Calu3 (cell line): ENCODE measurements at regions of chr4 and their contacts with region 1.

Region 1: GRCh38 chr4:155529272-155529671 is 137.4 kb upstream of the GUCY1A1 start:
- DNase-seq: peak; percentile 43
- H3K4me3 Mint-ChIP-seq: no peak overlapping the region
- H3K27ac Mint-ChIP-seq: peak overlapping the region; percentile 89
- H3K4me1 Mint-ChIP-seq: peaks cover 16% of the 10 kb centered on the region
- H3K27me3 Mint-ChIP-seq: no peaks in the 10 kb centered on the region
- CTCF ChIP-seq: peak; percentile 27

Region 2: GRCh38 chr4:155543126-155543765 is 14.0 kb after region 1 on chr4:
- CTCF ChIA-PET with region 1: no interaction called
- intact Hi-C with region 1: no loop called
- DNase-seq: no peak
- H3K4me3 Mint-ChIP-seq: no peak overlapping the region
- H3K27ac Mint-ChIP-seq: no peak overlapping the region
- H3K4me1 Mint-ChIP-seq: no peaks in the 10 kb centered on the region
- H3K27me3 Mint-ChIP-seq: no peaks in the 10 kb centered on the region
- CTCF ChIP-seq: no peak

Region 3: GRCh38 chr4:155667568-155668511 is 138.6 kb after region 1 on chr4:
- CTCF ChIA-PET with region 1: no interaction called
- intact Hi-C with region 1: loop called (anchors 1 kb)
- DNase-seq: peak; percentile 45
- H3K4me3 Mint-ChIP-seq: peak overlapping the region; percentile 85
- H3K27ac Mint-ChIP-seq: peak overlapping the region; percentile 81
- H3K4me1 Mint-ChIP-seq: peaks cover 36% of the 10 kb centered on the region
- H3K27me3 Mint-ChIP-seq: no peaks in the 10 kb centered on the region
- CTCF ChIP-seq: no peak

Region 4: GRCh38 chr4:155693015-155693663 is 163.9 kb after region 1 on chr4:
- CTCF ChIA-PET with region 1: no interaction called
- intact Hi-C with region 1: loop called (anchors 1 kb)
- DNase-seq: no peak
- H3K4me3 Mint-ChIP-seq: peak overlapping the region; percentile 61
- H3K27ac Mint-ChIP-seq: peak overlapping the region; percentile 75
- H3K4me1 Mint-ChIP-seq: peaks cover 39% of the 10 kb centered on the region
- H3K27me3 Mint-ChIP-seq: no peaks in the 10 kb centered on the region
- CTCF ChIP-seq: no peak